Activated CD4-positive, alpha-beta memory T cell treated with anti-CD3 and anti-CD28 coated beads, Interleukin-2, amount 10 ng/mL, durations not matched to agents 7 days and 5 days (primary cell): ENCODE measurements at regions of chr1 and their contacts with region 1.

Region 1: DNA sequence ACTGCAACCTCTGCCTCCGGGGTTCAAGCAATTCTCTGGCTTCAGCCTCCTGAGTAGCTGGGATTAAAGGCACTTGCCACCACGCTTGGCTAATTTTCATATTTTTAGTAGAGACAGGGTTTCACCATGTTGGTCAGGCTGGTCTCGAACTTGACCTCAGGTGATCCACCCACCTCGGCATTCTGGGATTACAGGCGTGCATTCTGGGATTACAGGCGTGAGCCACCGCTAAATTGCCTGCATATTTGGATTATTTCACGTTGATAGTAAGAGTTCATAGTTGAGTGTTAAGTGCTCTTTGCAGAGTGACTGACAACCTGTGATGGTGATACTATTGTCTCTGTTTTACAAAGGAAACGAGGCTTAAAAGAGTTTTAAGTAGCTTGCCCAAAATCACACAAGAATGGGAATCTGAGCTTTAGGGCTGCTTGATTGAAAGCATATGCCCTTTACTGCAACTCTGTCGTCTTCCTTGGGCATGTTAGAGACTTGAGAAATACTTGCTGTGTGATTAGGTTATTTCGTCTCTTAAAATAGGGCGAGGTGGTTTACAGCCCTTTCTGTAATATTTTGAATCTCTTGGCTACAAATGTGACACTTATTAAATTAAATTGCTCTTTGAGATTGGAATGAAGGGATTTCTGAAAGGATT is 12.4 kb downstream of the CDC42 start:
- DNase-seq: no peak
- H3K4me3 Mint-ChIP-seq: no peak overlapping the region
- H3K27ac Mint-ChIP-seq: no peak overlapping the region
- H3K4me1 Mint-ChIP-seq: peaks cover 75% of the 10 kb centered on the region
- H3K27me3 Mint-ChIP-seq: no peaks in the 10 kb centered on the region

Region 2: DNA sequence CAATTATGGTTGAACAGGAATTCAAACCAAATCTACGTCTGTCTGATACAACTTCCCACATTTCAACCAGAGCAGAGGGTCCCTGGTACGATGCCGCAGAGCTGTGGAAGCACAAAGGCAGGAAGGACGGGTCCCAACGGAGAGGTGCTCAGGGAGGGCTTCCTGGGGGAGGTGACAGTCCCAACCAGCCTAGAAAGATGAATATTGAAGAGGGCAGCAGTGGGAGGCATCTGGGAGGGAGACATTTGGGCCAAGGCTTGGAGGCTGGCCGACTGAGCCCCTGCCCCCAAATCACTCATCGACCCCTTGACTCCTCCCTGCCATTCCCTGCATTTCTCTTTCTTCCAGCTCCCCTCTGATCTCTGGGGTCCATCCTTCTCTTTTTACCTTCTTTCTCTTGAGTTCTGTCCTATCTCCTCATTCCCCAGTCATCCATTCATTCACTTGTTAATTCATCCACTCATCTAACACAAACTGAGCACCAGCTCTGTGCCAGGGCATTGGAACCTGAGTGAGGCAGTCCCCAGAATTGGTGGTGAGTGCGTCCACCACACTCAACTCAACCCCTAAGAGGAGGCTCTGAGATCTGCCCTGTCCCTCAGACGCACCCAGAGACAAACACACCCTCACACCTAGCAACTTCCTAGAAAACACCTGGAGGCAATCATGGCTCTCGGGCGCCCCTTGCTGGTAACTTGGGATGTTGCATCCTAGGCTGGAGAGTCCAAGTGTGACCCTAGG is 101.2 kb before region 1 on chr1:
- CTCF ChIA-PET with region 1: no interaction called
- POLR2A ChIA-PET with region 1: no interaction called
- DNase-seq: peak; percentile 85
- H3K4me3 Mint-ChIP-seq: no peak overlapping the region
- H3K27ac Mint-ChIP-seq: no peak overlapping the region
- H3K4me1 Mint-ChIP-seq: peaks cover 4% of the 10 kb centered on the region
- H3K27me3 Mint-ChIP-seq: peaks cover 2% of the 10 kb centered on the region

Region 3: GRCh38 chr1:22077728-22078127 is 12.9 kb after region 1 on chr1:
- CTCF ChIA-PET with region 1: interaction called, 3 read pairs
- POLR2A ChIA-PET with region 1: interaction called, 14 read pairs
- DNase-seq: no peak
- H3K4me3 Mint-ChIP-seq: no peak overlapping the region
- H3K27ac Mint-ChIP-seq: no peak overlapping the region
- H3K4me1 Mint-ChIP-seq: peaks cover 76% of the 10 kb centered on the region
- H3K27me3 Mint-ChIP-seq: no peaks in the 10 kb centered on the region

Region 4: DNA sequence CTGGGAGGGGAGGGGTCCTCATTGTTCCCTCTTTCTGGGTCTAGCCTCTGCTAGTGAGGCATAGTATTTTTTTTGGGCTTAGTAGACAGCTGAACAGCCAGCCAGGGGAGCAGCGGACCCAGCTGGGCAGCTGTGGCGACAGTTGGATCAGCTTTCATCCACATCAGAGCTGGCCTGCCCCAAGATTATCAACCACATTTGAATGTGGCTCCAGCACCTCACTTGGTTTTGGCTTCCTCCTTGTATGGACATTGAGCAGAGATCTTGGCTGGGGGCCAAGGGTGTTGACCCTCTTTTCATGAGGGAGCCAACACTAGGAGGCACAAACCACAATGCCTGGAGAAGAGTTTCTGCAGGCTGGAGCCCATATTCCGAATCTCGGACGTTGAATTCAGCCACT is 53.0 kb after region 1 on chr1:
- CTCF ChIA-PET with region 1: no interaction called
- POLR2A ChIA-PET with region 1: no interaction called
- DNase-seq: no peak
- H3K4me3 Mint-ChIP-seq: no peak overlapping the region
- H3K27ac Mint-ChIP-seq: no peak overlapping the region
- H3K4me1 Mint-ChIP-seq: peaks cover 5% of the 10 kb centered on the region
- H3K27me3 Mint-ChIP-seq: no peaks in the 10 kb centered on the region

Region 5: DNA sequence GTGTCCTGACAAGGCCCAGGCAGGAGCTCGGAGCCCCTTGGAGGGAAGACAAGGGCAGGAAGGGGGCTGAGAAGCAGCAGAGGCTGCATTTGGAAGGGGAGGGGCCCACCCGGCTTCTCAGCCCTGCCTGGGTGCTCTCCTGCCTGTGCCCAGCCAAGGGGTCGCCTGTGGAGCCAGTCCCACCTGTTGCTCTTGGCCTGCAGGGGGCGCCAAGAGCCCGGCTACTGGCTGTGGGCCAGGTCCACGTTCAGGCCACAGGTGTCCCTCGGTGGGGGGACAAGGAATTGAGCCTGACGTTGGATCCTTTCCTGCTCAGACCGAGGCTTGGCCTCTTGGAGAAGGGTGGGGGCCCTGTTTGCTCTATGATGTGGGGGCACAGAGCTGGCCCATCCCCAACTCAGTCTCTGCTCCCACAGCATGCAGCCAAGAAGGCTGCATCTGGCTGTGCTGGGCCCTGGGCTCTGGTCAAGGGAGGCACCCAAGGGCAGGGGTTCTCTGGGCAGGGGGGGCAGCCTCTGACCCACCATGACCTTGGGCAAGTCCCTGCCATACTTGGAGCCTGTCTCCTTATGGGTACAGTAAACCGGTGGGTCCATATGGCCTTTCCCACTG is 67.1 kb after region 1 on chr1:
- CTCF ChIA-PET with region 1: no interaction called
- POLR2A ChIA-PET with region 1: no interaction called
- DNase-seq: peak; percentile 62
- H3K4me3 Mint-ChIP-seq: no peak overlapping the region
- H3K27ac Mint-ChIP-seq: no peak overlapping the region
- H3K4me1 Mint-ChIP-seq: no peaks in the 10 kb centered on the region
- H3K27me3 Mint-ChIP-seq: no peaks in the 10 kb centered on the region